ENCODE measurements at regions of chr22 and their contacts with region 1.

Region 1: DNA sequence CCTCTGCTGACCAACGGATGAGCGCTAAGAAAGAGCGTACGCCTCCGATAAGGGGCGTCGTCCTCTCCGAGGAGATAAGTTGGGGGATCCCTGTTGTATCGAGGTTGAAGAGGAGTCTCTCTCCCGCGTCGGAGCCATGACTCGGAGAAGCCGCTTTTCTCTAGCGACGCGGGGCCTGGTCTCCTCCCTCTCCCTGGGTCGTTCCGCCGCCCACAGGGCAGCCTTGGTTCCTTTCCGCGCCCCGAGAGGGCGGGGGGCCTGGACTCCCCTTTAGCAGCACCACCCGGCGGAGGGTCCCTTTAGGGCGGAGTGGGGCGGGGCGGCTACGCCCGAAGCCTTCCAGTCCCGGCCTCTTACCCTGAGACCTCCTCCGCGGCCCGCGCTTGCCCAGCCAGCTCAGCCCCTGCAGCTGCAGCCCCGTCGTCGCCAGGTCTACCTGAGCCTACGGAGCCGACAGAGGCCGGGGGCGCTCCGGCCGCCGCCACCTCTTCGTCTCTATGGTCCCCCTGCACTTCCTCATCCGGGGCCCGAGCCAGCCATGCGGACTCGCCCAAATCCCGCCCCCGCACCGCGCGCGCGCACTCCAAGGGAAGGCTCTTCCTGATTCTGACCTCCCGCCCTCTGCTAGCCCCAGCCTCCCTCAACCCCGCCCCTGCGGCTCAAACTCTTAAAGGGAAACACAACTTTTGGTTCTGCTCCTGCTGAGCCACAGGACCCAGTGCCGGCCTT is at the start of gene PRR14L:
- DNase-seq: peak; percentile 92 to 99
- H3K4me3 ChIP-seq: peak within 1 kb of the TSS; percentile 91
- H3K4me1 ChIP-seq: peaks cover 34% of the 10 kb centered on the region
- H3K27me3 ChIP-seq: no peaks in the 10 kb centered on the region

Region 2: DNA sequence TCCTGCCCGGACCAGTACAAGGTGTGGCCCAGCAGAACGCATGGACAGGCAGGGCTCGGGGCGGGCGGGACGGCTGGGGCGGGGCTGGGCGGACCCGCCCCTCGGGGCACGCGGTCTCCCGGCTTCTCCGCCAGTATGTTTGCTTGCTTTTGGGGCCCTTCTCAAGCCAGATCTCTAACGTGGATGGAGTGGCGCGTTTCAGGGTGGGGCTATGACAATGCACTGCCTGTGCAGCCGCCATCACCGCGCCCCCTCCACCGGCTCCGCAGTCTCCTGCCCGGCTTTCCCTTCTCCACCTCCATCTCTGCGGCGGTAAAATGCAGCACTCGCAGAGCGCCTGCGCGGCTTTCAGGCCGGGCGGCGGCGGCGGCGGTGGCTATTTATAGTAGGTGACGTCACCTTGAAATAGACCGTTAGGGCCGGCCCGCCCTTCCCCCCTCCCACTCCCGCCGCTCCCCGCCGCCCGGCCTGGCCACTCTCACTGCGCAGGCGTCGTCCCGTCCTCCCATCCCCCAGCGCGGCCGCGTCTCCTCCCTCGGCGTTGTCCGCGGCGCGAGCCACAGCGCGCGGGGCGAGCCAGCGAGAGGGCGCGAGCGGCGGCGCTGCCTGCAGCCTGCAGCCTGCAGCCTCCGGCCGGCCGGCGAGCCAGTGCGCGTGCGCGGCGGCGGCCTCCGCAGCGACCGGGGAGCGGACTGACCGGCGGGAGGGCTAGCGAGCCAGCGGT is 194.3 kb after region 1 on chr22 and contains the start of gene YWHAH:
- in situ Hi-C with region 1: loop called (anchors 10 kb)
- DNase-seq: peak; percentile 92 to 97
- H3K4me3 ChIP-seq: peak within 1 kb of the TSS; percentile 79
- H3K4me1 ChIP-seq: peaks cover 11% of the 10 kb centered on the region
- H3K27me3 ChIP-seq: no peaks in the 10 kb centered on the region

Measured in HAP-1 (cell line).